Right ventricle myocardium inferior (tissue), 1 donor: ENCODE measurements at regions of chr11 and their contacts with region 1.

Region 1: GRCh38 chr11:66311965-66312548 is 4.8 kb downstream of the CD248 start:
- DNase-seq: peak; percentile 95
- ATAC-seq: peak; percentile 80

Region 2: GRCh38 chr11:66328307-66329144 is 16.5 kb after region 1 on chr11:
- intact Hi-C with region 1: loop called (anchors 1 kb)
- DNase-seq: peak; percentile 88
- ATAC-seq: peak; percentile 73

Region 3: GRCh38 chr11:66386171-66387069 is 74.4 kb after region 1 on chr11:
- intact Hi-C with region 1: loop called (anchors 1 kb)
- DNase-seq: peak; percentile 79
- ATAC-seq: peak; percentile 83